Activated naive CD4-positive, alpha-beta T cell treated with anti-CD3 and anti-CD28 coated beads for 36 hours (primary cell): ENCODE measurements at regions of chr12 and their contacts with region 1.

Region 1: DNA sequence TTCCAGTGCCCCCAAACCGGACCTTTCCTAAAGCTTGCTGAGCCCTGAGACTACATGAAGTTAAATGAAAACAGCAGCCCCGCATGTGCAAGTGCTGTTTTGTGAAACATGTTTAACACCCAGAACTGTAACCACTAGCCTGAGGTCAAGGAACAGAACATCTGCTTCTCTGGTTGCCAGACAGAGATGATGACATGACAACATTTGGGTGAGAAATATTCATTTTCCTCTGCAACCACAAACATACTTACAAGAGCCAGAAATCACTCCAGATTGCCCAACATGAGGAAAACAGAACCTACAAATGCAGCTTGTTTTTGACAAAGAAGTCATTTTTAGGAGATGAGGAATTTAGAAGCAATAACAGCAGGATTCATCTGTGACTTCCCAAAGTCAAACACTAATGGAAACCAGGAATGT is 110.4 kb downstream of the BCAT1 start:
- DNase-seq: peak; percentile 45
- H3K4me3 Mint-ChIP-seq: no peak overlapping the region
- H3K27ac Mint-ChIP-seq: peak overlapping the region; percentile 83
- H3K4me1 Mint-ChIP-seq: peaks cover 32% of the 10 kb centered on the region
- H3K27me3 Mint-ChIP-seq: peaks cover 11% of the 10 kb centered on the region

Region 2: DNA sequence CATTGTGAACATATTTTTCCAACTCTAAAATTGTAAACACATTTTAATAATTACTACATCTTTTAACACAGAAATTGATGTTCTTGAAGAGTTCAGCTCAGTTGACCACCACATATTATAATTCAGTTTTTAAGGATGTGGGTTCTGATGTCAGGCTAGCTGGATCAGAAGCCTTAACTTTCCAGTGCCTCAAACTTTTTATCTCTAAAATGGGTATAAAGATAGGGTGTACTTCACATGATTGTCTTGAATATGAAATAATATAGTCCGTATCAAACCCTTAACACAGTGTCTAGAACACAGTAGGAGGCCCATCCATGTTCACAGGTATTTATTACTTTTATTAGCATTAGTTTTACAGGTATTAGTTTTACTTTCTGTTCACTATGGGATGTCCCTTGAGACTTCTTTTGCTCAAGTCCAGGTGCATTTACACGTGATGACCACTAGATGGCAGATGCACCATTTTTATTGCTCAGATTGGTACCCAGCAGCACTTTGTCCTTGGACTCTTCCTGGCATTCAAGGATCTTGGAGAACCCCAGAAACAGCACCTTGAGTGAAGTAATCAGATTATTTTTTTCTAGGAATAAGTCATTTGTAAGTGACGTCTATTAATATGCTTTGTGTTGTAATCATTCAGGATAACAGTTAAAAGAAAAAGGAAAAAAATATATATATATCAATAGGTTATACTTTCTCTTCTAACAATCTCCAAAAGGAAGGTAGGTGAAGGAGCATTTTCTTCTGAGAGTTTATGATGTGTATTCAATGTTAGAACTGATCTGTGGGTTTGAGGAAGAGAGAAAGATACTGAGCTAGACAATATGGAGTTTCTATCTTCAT is 1633.4 kb before region 1 on chr12:
- CTCF ChIA-PET with region 1: no interaction called
- intact Hi-C with region 1: loop called (anchors 1 kb)
- DNase-seq: peak; percentile 13
- H3K4me3 Mint-ChIP-seq: no peak overlapping the region
- H3K27ac Mint-ChIP-seq: no peak overlapping the region
- H3K4me1 Mint-ChIP-seq: no peaks in the 10 kb centered on the region
- H3K27me3 Mint-ChIP-seq: peaks cover 5% of the 10 kb centered on the region

Region 3: GRCh38 chr12:24398605-24399004 is 439.9 kb before region 1 on chr12:
- CTCF ChIA-PET with region 1: no interaction called
- intact Hi-C with region 1: no loop called
- DNase-seq: no peak
- H3K4me3 Mint-ChIP-seq: no peak overlapping the region
- H3K27ac Mint-ChIP-seq: no peak overlapping the region
- H3K4me1 Mint-ChIP-seq: no peaks in the 10 kb centered on the region
- H3K27me3 Mint-ChIP-seq: peaks cover 2% of the 10 kb centered on the region

Region 4: DNA sequence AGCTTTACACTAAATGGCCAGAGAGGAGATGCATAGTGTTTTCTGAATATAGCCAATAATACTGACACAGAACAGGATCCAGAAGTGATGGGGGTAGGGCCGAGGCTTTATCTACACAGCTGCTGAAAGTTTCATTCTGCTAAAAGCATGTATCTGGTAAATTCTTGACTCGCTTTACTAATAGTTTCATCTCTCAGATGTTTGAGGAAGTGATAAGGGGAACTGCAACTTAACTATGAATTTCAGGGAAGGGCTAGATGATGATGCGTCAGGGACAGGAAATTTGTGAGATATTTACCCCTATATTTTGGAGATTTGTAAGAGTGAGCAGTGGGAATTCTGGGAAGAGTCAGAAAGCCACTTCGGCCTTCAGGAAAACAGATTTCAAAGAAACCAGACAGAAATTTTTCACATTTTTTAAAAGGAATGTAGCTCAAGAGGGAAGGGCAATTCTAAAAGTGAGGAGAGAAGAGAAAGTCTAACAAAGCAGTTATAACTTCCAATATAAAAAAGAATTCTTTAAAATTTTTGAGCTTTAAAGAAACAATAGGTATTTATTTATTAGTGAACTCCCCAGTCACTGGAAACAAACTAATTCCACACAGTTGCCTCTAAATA is 132.7 kb before region 1 on chr12:
- CTCF ChIA-PET with region 1: no interaction called
- intact Hi-C with region 1: loop called (anchors 1 kb)
- DNase-seq: peak; percentile 41
- H3K4me3 Mint-ChIP-seq: no peak overlapping the region
- H3K27ac Mint-ChIP-seq: peak overlapping the region; percentile 75
- H3K4me1 Mint-ChIP-seq: peaks cover 17% of the 10 kb centered on the region
- H3K27me3 Mint-ChIP-seq: peaks cover 2% of the 10 kb centered on the region

Region 5: GRCh38 chr12:24795699-24796385 is 42.7 kb before region 1 on chr12:
- CTCF ChIA-PET with region 1: no interaction called
- intact Hi-C with region 1: loop called (anchors 1 kb)
- DNase-seq: no peak
- H3K4me3 Mint-ChIP-seq: peak overlapping the region; percentile 54
- H3K27ac Mint-ChIP-seq: no peak overlapping the region
- H3K4me1 Mint-ChIP-seq: peaks cover 28% of the 10 kb centered on the region
- H3K27me3 Mint-ChIP-seq: no peaks in the 10 kb centered on the region

Region 6: GRCh38 chr12:24919346-24920001 is 80.9 kb after region 1 on chr12:
- CTCF ChIA-PET with region 1: no interaction called
- intact Hi-C with region 1: loop called (anchors 1 kb)
- DNase-seq: peak; percentile 78
- H3K4me3 Mint-ChIP-seq: no peak overlapping the region
- H3K27ac Mint-ChIP-seq: no peak overlapping the region
- H3K4me1 Mint-ChIP-seq: peaks cover 42% of the 10 kb centered on the region
- H3K27me3 Mint-ChIP-seq: peaks cover 13% of the 10 kb centered on the region

Region 7: DNA sequence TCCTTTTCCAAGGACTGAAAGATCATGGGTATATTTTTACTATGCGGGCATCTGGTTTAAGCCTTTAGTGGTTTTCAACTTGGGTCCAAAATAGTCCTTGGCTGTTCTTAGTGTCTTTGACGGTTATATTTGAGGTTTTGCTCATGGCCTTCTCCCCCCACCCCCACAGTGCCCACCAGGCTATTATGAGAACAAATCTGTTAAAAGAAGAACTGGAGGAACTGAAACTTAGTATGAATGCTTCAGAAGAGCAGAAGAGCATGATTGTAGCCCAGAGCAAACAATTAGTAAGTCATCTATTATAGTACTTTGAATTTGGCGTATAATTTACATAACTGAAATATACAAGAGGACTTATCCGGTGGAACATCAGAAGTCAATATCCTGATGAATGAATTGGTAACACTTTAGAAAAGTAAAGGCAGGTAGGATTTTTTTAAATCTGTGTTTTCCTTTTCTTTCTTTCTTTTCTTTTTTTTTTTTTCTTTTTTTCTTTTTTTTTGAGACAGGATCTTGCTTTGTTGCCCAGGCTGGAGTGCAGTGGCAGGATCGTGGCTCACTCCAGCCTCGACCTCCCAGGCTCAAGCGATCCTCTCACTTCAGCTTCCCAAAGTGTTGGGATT is 182.2 kb after region 1 on chr12:
- CTCF ChIA-PET with region 1: no interaction called
- intact Hi-C with region 1: no loop called
- DNase-seq: no peak
- H3K4me3 Mint-ChIP-seq: no peak overlapping the region
- H3K27ac Mint-ChIP-seq: no peak overlapping the region
- H3K4me1 Mint-ChIP-seq: no peaks in the 10 kb centered on the region
- H3K27me3 Mint-ChIP-seq: peaks cover 6% of the 10 kb centered on the region

Region 8: DNA sequence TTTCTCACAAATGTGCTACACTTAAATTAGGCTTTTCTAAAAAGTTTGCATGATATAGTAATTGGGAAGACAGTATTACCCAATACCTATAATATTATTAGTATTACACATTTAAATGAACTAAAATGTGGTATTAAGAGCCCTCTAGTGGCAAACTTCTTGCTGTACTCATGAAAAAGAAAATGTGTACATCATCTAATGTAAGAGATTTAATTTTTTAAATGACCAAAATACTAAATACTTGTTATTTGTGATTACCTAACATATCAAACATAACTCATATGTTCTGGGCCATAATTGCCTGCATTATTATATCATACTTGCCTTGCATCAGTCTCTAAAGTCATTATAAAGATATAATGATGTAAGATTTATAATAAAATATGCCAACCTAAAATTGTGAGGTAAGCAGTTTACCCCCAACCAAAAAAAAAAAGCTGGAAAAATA is 292.2 kb after region 1 on chr12:
- CTCF ChIA-PET with region 1: no interaction called
- intact Hi-C with region 1: loop called (anchors 5 kb)
- DNase-seq: no peak
- H3K4me3 Mint-ChIP-seq: no peak overlapping the region
- H3K27ac Mint-ChIP-seq: no peak overlapping the region
- H3K4me1 Mint-ChIP-seq: no peaks in the 10 kb centered on the region
- H3K27me3 Mint-ChIP-seq: peaks cover under 1% of the 10 kb centered on the region